Posterior vena cava (tissue), 2 donors: ENCODE measurements at regions of chr12 and their contacts with region 1.

Region 1: GRCh38 chr12:5988659-5989116 is 43.6 kb upstream of the ANO2 start:
- DNase-seq: peak; percentile 93

Region 2: DNA sequence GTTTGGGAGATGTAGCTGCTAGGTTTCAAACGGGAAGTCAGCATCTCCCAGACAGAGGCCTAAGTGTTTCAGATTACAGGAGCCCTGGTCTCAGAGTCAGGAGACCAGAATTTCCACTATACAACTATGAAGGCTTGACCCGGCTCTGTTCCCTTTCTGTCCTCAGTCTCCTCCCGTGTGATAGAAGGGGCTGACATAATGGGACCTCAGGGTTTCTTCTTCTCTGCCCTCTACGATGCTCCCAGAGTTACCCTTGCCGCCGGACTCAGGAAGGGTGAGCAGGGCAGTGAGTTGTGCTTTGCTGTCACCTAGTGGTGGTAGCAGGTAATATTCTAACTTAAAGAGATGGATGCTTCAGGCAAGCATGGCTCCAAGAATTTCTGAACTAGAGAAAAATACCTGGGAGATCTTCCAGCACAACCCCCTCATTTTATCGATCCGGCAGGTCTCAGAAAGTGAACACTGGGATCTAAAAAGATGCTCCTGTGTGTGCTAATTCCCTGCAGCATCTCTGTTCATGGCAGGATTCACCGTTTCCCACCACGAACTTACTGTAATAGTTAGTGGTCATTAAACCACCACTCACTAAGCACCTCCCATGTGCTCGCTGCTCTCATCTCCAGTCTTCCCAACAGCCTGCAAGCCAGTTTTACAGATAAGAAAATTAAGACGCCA is 51.3 kb after region 1 on chr12:
- intact Hi-C with region 1: loop called (anchors 2 to 5 kb)
- DNase-seq: peak; percentile 83

Region 3: DNA sequence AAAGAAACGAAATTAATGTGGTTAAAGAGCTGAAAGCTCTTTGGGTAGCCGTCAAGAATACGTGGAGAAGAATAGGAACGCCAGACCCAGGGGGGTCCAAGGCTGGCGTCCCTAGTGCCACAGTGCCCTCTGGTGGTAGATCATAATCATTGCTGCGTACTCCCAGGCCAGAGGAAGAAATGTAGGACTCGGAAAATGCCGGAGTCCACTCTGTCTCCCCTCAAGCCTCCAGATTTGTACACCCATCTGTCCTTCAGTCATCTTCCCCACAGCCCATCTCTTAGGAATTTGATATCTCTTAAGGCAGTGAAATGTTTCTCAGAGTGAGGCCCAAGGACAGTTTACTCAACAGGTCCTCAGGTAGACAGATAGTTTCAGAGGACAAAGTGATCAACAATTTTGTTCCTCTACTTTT is 296.4 kb after region 1 on chr12:
- intact Hi-C with region 1: loop called (anchors 5 to 10 kb)
- DNase-seq: peak; percentile 82